Mammary epithelial cell (primary cell): ENCODE measurements at regions of chr17 and their contacts with region 1.

Region 1: DNA sequence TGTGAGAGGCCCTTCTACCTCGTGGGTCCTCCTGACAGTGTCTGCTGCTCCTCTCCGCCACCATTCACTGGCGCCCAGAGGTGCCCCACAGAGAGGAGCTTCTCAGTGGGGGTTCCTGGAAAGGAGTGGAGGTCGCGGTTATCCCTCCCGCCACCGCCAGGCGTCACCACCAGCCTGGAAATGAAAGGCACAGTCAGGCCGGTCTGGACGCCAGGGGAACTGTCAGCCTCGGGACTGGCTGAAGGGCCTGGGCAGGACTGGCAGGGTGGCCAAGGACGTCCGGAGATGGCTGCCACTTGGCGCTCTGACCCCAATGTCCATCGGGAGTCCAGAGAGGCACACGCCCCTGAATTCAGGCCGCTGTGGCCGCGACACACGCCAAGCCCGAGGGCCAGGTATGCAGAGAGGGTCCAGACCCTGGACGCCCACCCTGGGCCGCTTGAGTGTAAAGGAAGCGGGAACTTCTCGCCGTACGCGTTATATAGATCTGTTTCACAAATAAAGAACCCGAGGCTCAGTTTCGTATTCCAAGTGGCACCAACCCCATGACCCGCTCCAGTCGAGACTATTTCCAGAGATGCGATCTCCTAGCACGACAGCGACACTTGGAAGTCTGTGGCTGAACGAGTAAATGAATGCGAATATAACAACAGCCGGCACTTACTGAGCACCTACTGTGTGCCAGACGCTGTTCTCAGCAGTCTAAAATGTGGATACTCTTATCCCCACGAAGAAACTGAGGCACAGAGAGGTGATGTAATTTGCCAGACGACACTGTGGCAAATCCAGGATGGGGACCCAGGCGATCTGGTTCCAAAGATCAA is 7.6 kb upstream of the NXPH3 start:
- DNase-seq: peak; percentile 60
- H3K4me3 ChIP-seq: peak overlapping the region in 2 of 3 experiments; percentile 30 to 50
- H3K27ac ChIP-seq: no peak overlapping the region
- H3K4me1 ChIP-seq: peaks cover 21% of the 10 kb centered on the region
- H3K27me3 ChIP-seq: no peaks in the 10 kb centered on the region
- CTCF ChIP-seq: peak; percentile 85 to 93

Region 2: GRCh38 chr17:49315551-49316257 is 252.4 kb before region 1 on chr17:
- CTCF ChIA-PET with region 1: no interaction called
- dilution Hi-C with region 1: no loop called
- in situ Hi-C with region 1: loop called in 1 of 2 experiments (anchors 25 kb)
- intact Hi-C with region 1: no loop called
- DNase-seq: peak; percentile 80
- H3K4me3 ChIP-seq: no peak overlapping the region
- H3K27ac ChIP-seq: no peak overlapping the region
- H3K4me1 ChIP-seq: peaks cover 5% of the 10 kb centered on the region
- H3K27me3 ChIP-seq: no peaks in the 10 kb centered on the region
- CTCF ChIP-seq: peak; percentile 77 to 85

Region 3: DNA sequence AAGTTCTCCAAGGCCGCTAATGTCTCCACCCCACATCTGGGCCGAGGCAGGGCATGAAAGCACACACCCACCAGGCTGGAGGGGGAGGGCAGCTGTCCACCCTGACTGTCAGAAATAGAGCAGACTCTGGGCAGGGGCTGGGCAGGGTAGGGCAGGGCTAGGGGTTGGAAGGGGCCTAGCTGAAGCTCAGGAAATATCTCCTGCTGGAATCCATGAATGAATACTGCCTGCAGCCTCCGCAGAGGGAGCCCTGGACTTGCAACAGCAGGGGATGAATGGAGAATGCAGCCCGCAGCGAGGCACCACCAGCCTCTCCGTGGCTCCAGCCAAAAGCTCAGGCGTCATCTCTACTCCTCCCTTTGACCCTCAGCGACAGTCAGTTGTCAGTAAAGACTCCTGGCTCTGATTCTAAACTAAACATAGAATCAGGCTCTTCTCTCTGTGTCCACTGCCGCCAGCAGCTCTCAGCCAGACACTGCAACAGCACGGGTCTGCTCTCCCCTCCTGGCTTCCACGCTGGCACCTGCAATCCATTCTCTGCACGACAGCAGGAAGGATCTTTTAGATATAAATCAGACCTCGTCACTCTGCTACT is 96.9 kb before region 1 on chr17:
- CTCF ChIA-PET with region 1: no interaction called
- dilution Hi-C with region 1: no loop called
- in situ Hi-C with region 1: no loop called
- intact Hi-C with region 1: no loop called
- DNase-seq: no peak
- H3K4me3 ChIP-seq: no peak overlapping the region
- H3K27ac ChIP-seq: no peak overlapping the region
- H3K4me1 ChIP-seq: no peaks in the 10 kb centered on the region
- H3K27me3 ChIP-seq: no peaks in the 10 kb centered on the region
- CTCF ChIP-seq: no peak

Region 4: GRCh38 chr17:49677933-49678847 is 110.1 kb after region 1 on chr17 and contains the start of gene SPOP:
- CTCF ChIA-PET with region 1: interaction called, 20 read pairs
- dilution Hi-C with region 1: no loop called
- in situ Hi-C with region 1: no loop called
- intact Hi-C with region 1: no loop called
- DNase-seq: peak; percentile 99
- H3K4me3 ChIP-seq: peak within 1 kb of the TSS; percentile 71 to 78 (median 71)
- H3K27ac ChIP-seq: peak within 1 kb of the TSS; percentile 83
- H3K4me1 ChIP-seq: peaks cover 12% of the 10 kb centered on the region
- H3K27me3 ChIP-seq: no peaks in the 10 kb centered on the region
- CTCF ChIP-seq: no peak
- total RNA-seq, gene SPOP: 36.0 to 49.8 TPM

Region 5: DNA sequence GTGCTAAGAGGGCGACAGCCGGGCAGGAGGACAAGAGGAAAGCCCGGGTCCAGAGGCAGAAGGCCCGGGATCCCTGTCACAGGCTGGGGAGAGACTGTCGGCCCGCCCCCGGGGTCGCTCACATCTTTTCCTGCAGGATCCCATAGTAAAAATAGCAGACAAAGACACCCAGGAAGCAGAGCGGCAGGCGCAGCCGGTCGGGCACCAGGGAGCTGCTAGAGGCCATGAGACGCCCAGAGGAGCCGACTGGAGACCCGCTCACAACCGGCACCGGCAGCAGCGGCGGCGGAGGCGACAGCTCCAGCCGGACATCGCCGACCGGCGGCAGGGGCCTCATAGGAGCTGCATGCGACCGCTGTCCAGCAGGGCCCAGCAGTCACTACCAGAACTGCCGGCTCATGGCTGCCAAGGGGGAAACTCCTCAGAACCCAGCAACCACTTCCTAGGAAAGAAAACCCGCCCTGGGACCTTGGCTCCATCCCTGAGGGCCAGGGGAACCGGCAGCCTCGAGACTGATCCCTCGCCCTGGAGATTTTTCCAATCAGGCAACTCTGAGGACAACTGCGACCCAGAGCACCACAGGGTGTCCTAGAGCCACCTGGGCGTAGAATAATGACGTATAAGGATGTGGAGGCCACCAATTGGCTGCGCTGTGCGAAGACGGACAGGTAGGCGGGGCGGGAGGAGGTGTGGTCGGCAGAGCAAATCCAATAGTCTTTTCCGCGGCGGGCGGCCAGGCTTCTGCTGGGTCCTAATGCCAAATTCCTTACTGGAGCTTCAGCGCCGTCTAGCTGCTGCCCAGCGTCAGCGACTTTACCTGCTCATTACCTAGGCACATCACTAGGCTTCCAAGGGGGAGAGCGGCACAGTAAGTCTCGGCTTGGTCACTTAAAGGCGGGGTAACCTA is 139.8 kb after region 1 on chr17 and contains the start of gene SLC35B1:
- CTCF ChIA-PET with region 1: interaction called, 34 read pairs
- dilution Hi-C with region 1: no loop called
- in situ Hi-C with region 1: no loop called
- intact Hi-C with region 1: loop called (anchors 1 kb)
- DNase-seq: peak; percentile 98
- H3K4me3 ChIP-seq: peak within 1 kb of the TSS; percentile 82 to 94 (median 87)
- H3K27ac ChIP-seq: peak within 1 kb of the TSS; percentile 89
- H3K4me1 ChIP-seq: peaks cover 16% of the 10 kb centered on the region
- H3K27me3 ChIP-seq: no peaks in the 10 kb centered on the region
- CTCF ChIP-seq: peak; percentile 92 to 96
- total RNA-seq, gene SLC35B1: 35.5 to 55.9 TPM

Region 6: GRCh38 chr17:49788478-49789242 is 220.6 kb after region 1 on chr17 and contains the start of gene KAT7:
- CTCF ChIA-PET with region 1: no interaction called
- dilution Hi-C with region 1: no loop called
- in situ Hi-C with region 1: no loop called
- intact Hi-C with region 1: loop called (anchors 2 kb)
- DNase-seq: peak; percentile 99
- H3K4me3 ChIP-seq: peak within 1 kb of the TSS; percentile 92 to 100 (median 99)
- H3K27ac ChIP-seq: peak within 1 kb of the TSS; percentile 96
- H3K4me1 ChIP-seq: peaks cover 11% of the 10 kb centered on the region
- H3K27me3 ChIP-seq: no peaks in the 10 kb centered on the region
- CTCF ChIP-seq: no peak
- total RNA-seq, gene KAT7: 22.5 to 43.2 TPM

Region 7: GRCh38 chr17:49861150-49861892 is 293.2 kb after region 1 on chr17:
- CTCF ChIA-PET with region 1: no interaction called
- dilution Hi-C with region 1: no loop called
- in situ Hi-C with region 1: loop called in 1 of 2 experiments (anchors 10 kb)
- intact Hi-C with region 1: loop called (anchors 5 kb)
- DNase-seq: peak; percentile 24
- H3K4me3 ChIP-seq: no peak overlapping the region
- H3K27ac ChIP-seq: no peak overlapping the region
- H3K4me1 ChIP-seq: no peaks in the 10 kb centered on the region
- H3K27me3 ChIP-seq: no peaks in the 10 kb centered on the region
- CTCF ChIP-seq: peak; percentile 73 to 91